PC-9 (cell line): ENCODE measurements at regions of chr5 and their contacts with region 1.

Region 1: DNA sequence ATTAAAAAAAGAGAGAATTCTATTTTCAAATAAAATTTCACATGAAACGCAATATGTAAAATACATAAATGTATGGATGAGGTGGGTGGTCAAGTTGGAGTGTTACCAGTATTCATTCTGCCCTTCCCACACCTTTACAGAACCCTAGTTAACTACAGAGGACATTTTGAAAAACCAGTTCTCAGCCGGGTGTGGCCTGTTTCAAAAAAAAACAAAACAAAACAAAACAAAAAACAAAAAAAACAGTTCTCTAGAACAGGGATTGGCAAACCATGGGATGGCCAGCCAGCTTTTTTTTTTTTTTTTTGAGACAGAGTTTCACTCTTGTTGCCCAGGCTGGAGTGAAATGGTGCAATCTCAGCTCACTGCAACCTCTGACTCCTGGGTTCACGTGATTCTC is 28.4 kb upstream of the HK3 start:
- DNase-seq: peak; percentile 7 to 46
- H3K4me3 ChIP-seq: no peak overlapping the region
- H3K27ac ChIP-seq: peak overlapping the region; percentile 47; the same call in 1 of the 2 replicates
- H3K4me1 ChIP-seq: peaks cover 13% of the 10 kb centered on the region
- H3K27me3 ChIP-seq: no peaks in the 10 kb centered on the region
- CTCF ChIP-seq: no peak

Region 2: GRCh38 chr5:177022384-177023308 is 95.1 kb after region 1 on chr5 and contains the start of gene ZNF346:
- CTCF ChIA-PET with region 1: no interaction called
- POLR2A ChIA-PET with region 1: interaction called, 15 read pairs
- intact Hi-C with region 1: no loop called
- DNase-seq: peak; percentile 82 to 89
- H3K4me3 ChIP-seq: peak within 1 kb of the TSS; percentile 98
- H3K27ac ChIP-seq: peak within 1 kb of the TSS; percentile 39
- H3K4me1 ChIP-seq: peaks cover 13% of the 10 kb centered on the region
- H3K27me3 ChIP-seq: no peaks in the 10 kb centered on the region
- CTCF ChIP-seq: peak; percentile 59
- total RNA-seq, gene ZNF346: 23.8 and 26.0 TPM in 2 replicates